Left cardiac atrium (tissue), 4 donors: ENCODE measurements at regions of chr6 and their contacts with region 1.

Region 1: DNA sequence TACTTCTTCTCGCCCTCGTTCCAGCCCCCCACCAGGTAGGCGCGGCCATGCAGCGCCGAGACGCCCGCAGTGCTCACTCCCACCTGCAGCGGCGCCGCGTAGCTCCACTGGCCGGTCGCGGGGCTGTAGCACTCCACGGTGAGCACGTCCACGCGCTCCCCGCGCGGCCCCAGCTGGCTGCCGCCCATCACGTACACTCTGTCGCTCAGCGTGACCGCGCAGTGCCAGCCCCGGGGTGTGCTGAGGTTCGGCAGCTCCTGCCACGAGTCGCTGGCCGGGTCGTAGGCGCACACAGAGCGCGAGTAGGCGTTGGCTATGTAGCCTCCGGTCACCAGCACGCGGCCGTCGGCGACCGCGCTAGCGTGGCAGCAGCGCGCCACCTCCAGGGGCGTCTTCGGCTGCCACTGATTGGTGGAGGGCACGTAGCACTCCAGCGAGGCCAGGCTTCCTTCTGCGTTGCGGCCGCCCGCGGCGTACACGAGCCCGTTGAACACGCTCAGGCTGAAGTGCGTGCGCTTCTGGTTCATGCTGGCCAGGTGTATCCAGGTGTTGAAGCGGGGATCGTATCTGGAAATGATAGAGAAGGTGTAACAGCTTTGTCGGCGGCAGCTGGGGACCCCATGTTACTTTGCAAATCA is 13.7 kb downstream of the KLHL31 start:
- DNase-seq: peak; percentile 79
- ATAC-seq: peak; percentile 91 to 92

Region 2: GRCh38 chr6:53492860-53493634 is 158.8 kb before region 1 on chr6:
- intact Hi-C with region 1: loop called in 1 of 2 experiments (anchors 5 kb)
- DNase-seq: no peak
- ATAC-seq: peak; percentile 78 to 82

Region 3: DNA sequence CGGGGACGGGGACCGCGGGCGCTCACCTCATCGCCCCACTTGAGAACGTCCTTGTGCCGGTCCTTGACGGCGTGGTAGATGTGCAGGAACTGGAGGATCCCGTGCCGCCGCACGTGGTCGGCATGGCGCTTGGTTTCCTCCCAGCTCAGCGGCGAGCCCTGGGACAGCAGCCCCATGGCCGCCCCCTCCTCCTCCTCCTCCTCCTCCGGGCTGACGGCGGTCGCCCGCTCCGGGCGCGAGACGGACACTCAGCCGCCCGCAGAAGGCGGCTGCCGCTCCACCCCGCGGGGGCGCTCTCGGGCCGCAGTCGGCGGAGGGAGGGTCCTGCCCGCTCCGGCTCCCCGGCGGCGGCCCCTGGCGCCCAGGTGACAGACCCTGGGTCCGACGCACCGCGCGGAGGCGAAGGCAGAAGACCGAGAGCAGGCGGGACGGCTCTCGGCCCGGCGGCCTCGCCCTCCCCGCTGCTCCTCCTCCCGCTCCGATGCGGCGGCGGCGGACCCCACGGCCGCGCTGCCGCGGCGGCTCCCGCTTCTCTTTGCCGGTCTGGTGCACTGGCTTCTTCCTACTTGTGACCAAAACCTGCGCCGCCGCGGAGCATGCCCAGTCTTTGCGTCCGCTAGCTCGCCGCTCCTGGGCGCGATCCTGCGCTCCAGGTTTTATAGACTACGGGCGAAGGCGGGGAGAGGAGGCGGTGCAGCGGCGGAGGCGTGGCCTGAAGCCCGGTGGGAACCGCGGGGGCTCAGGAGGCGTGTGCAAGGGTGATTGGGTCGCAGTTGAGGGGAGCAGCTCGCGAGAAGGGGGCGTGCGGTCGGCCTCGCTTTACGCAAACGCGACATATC is 107.2 kb before region 1 on chr6 and contains the start of gene GCLC:
- intact Hi-C with region 1: loop called (anchors 5 kb)
- DNase-seq: peak; percentile 96
- ATAC-seq: peak; percentile 80 to 85
- total RNA-seq, gene GCLC: 17.8 to 21.6 TPM

Region 4: GRCh38 chr6:53725791-53726431 is 74.0 kb after region 1 on chr6:
- intact Hi-C with region 1: loop called in 1 of 2 experiments (anchors 5 kb)
- DNase-seq: peak; percentile 79
- ATAC-seq: peak; percentile 82 to 86

Region 5: DNA sequence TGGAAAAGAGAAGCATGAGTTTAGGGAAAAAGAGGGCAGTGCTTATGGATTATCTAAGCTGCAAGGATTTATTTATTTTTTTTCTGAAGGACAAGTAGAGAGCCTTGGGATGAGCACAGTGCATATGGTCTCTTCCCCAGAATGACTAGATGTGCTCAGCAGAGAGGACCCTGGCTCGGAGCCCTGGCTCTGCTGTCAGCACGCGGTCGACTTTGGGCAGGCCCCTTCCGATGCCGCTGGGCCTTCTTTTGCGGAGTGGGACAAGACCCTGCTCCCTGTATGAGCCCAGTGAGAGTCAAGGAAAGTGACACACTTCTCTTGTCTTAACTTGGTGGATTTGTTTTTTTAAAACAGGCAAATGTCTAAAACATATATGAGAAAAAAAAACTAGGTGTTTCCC is 194.4 kb after region 1 on chr6:
- intact Hi-C with region 1: no loop called
- DNase-seq: no peak
- ATAC-seq: no peak